Gastrocnemius medialis (tissue), 4 donors: ENCODE measurements at regions of chr6 and their contacts with region 1.

Region 1: DNA sequence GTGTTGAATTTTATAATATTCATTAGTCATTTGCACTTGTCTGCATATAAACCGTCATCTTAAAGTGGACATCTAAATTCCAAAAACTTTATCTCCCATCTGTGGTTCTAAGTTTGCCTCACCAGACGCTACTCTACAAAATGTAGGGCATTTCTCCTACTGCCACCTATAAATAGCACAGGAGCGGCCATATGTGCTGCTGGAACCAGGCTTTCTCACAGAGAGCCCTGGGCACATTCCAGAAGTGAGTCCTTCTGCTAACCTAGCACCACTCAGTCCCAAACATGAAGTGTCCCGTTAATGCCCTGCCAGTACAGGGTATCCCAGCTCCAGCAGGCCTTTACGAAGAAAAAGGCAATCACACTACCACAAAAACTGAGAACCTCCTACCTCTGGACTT is 153.7 kb downstream of the TMEM242 start:
- DNase-seq: peak; percentile 41 to 69
- ATAC-seq: peak; percentile 91 to 99
- H3K4me3 ChIP-seq: no peak overlapping the region
- H3K27ac ChIP-seq: peak overlapping the region; percentile 33 to 76 (median 58)
- H3K4me1 ChIP-seq: peaks cover 13 to 19% of the 10 kb centered on the region in 2 donors
- H3K27me3 ChIP-seq: no peaks in the 10 kb centered on the region
- CTCF ChIP-seq: no peak
- POLR2A ChIP-seq: no peak

Region 2: GRCh38 chr6:157034436-157035230 is 135.0 kb before region 1 on chr6:
- in situ Hi-C with region 1: loop called in 1 of 4 experiments (anchors 10 kb)
- intact Hi-C with region 1: no loop called
- DNase-seq: no peak
- ATAC-seq: peak in 1 of 2 donors; percentile 42
- H3K4me3 ChIP-seq: no peak overlapping the region
- H3K27ac ChIP-seq: peak overlapping the region in 2 of 4 donors; percentile 4 to 8
- H3K4me1 ChIP-seq: peaks cover 41 to 45% of the 10 kb centered on the region in 2 donors
- H3K27me3 ChIP-seq: no peaks in the 10 kb centered on the region
- CTCF ChIP-seq: peak; percentile 22 to 55 (median 53)
- POLR2A ChIP-seq: no peak

Region 3: GRCh38 chr6:157123234-157123633 is 46.4 kb before region 1 on chr6:
- in situ Hi-C with region 1: no loop called
- intact Hi-C with region 1: no loop called
- DNase-seq: no peak
- ATAC-seq: no peak
- H3K4me3 ChIP-seq: no peak overlapping the region
- H3K27ac ChIP-seq: no peak overlapping the region
- H3K4me1 ChIP-seq: peaks cover 3 to 7% of the 10 kb centered on the region in 2 donors
- H3K27me3 ChIP-seq: no peaks in the 10 kb centered on the region
- CTCF ChIP-seq: no peak
- POLR2A ChIP-seq: no peak

Region 4: GRCh38 chr6:157428427-157429202 is 259.0 kb after region 1 on chr6:
- in situ Hi-C with region 1: no loop called
- intact Hi-C with region 1: no loop called
- DNase-seq: no peak
- ATAC-seq: peak in 1 of 2 donors; percentile 13
- H3K4me3 ChIP-seq: no peak overlapping the region
- H3K27ac ChIP-seq: peak overlapping the region in 3 of 4 donors; percentile 10 to 78 (median 31)
- H3K4me1 ChIP-seq: peaks cover 24 to 41% of the 10 kb centered on the region in 2 donors
- H3K27me3 ChIP-seq: no peaks in the 10 kb centered on the region
- CTCF ChIP-seq: no peak
- POLR2A ChIP-seq: no peak